ENCODE measurements at regions of chr12 and their contacts with region 1.

Region 1: DNA sequence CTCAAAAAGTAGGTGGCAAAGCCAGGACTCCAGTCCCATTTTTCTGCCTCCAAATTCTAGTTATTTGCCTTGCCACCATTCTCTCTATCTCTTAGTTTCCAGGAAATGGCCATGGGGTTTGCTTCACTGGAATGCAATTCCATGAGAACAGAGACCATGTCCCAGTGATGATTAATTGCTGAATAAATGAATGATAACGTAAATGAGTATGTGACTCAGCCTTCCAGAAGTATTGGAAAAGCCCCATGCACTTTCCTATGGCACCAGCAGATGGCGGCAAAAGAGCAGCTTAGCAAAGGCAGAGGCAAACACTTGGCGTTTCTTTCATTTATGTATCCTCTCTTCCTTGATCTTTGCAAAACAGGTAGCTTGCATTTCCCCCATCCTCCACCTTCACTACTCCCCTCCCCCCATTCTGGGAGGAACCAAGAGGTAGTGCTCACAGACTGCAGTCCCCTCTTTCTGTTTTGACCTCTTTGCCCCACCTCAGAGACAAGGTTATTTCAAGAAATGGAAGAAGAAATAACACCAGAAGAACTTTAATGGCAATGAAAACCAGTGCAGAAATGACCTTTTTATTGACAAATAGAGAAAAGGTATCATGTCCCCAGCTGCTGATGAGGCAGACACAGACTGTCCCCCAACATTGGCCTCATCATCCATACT is 21.3 kb downstream of the TBX3 start:
- DNase-seq: peak; percentile 80 to 82
- ATAC-seq: peak; percentile 52 to 82 (median 80)
- H3K4me3 ChIP-seq: no peak overlapping the region
- H3K27ac ChIP-seq: no peak overlapping the region
- H3K4me1 ChIP-seq: no peaks in the 10 kb centered on the region
- H3K27me3 ChIP-seq: peaks cover 9 to 61% (median 19%) of the 10 kb centered on the region in 3 donors
- CTCF ChIP-seq: peak; percentile 96

Region 2: GRCh38 chr12:115172521-115172920 is 509.9 kb after region 1 on chr12:
- intact Hi-C with region 1: loop called in 1 of 2 experiments (anchors 10 kb)
- DNase-seq: no peak
- ATAC-seq: no peak
- H3K4me3 ChIP-seq: no peak overlapping the region
- H3K27ac ChIP-seq: no peak overlapping the region
- H3K4me1 ChIP-seq: no peaks in the 10 kb centered on the region
- H3K27me3 ChIP-seq: no peaks in the 10 kb centered on the region
- CTCF ChIP-seq: no peak

Region 3: GRCh38 chr12:115632308-115632707 is 969.7 kb after region 1 on chr12:
- intact Hi-C with region 1: loop called in 1 of 2 experiments (anchors 5 kb)
- DNase-seq: no peak
- ATAC-seq: no peak
- H3K4me3 ChIP-seq: no peak overlapping the region
- H3K27ac ChIP-seq: no peak overlapping the region
- H3K4me1 ChIP-seq: no peaks in the 10 kb centered on the region
- H3K27me3 ChIP-seq: no peaks in the 10 kb centered on the region
- CTCF ChIP-seq: peak; percentile 37

Region 4: GRCh38 chr12:115752913-115753726 is 1090.5 kb after region 1 on chr12:
- intact Hi-C with region 1: loop called in 1 of 2 experiments (anchors 1 kb)
- DNase-seq: no peak
- ATAC-seq: peak; percentile 73 to 95 (median 84)
- H3K4me3 ChIP-seq: no peak overlapping the region
- H3K27ac ChIP-seq: no peak overlapping the region
- H3K4me1 ChIP-seq: no peaks in the 10 kb centered on the region
- H3K27me3 ChIP-seq: peaks cover 0 to 23% (median 6%) of the 10 kb centered on the region in 3 donors
- CTCF ChIP-seq: peak; percentile 71

Region 5: DNA sequence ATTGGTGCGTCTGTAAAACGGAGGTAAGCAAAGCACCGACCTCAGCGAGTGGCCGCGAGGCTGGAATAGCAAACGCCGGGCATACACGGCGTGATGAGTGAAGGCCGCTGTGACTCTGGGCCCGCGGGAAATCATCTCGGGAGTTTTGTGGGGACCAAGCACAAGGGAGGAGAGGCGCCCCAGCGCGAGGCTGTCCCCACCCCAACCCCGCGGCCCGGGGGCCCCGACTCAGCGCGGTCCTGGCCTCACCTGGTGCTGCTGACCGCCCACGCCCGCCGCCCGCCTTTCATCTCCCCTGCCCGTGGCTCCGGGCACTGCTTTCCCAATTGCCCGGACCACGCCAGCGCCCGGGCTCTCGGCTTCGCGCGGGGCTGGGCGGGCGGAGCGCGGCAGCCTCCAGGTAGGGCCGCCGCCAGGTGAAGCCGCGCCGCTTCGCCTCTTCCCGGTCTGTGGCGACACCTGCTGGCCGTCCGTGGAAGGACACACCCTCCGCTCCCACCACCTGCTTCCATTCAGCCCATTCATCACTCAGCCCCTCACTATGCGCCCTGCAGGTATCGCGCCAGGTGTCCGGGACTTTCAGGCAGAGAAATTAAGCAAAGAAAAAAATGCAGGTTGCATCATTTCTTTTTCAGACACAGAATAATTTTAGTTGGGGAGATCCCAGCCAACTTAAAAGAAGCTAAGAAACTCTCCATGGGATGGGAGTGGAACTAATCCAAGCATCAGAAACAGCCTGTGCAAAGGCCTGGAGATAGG is 1254.4 kb after region 1 on chr12:
- intact Hi-C with region 1: loop called (anchors 1 to 2 kb)
- DNase-seq: peak; percentile 54 to 75
- ATAC-seq: peak; percentile 80 to 91 (median 88)
- H3K4me3 ChIP-seq: peak overlapping the region; percentile 44
- H3K27ac ChIP-seq: no peak overlapping the region
- H3K4me1 ChIP-seq: no peaks in the 10 kb centered on the region
- H3K27me3 ChIP-seq: peaks cover 0 to 13% (median 3%) of the 10 kb centered on the region in 3 donors
- CTCF ChIP-seq: peak; percentile 99